Heart right ventricle (tissue), 16 donors: ENCODE measurements at regions of chr9 and their contacts with region 1.

Region 1: DNA sequence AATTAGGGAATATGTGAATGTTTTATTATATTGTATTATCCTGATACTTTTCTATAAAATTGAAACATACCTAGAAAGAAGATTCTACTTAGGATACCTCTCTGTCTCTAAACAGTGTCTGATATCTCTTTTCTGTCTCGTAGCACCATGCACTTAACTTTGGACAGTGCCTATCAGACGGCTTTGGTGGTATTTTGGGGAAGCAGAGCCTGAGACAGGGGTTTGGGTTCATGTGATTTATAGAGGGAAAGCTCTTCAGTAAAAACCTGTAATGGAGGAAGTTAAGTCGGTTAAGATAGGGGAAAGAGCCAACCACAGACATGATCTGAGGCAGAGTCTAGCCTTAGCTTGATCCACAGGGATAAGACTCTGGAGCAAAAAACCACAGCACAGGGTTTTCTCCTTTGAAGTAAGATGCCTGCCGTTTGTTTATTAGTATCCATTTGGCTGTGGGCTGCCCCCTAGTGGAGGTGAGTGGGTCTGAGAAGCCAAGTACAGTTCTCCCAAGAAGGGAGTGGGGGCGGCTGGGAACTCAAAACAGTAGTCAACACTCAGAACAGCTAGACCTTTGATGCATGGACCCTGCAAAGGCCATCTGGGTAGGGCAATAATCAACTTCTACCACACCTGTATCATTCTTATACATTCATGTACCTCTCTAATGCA is 141.2 kb upstream of the ASTN2 start:
- DNase-seq: peak; percentile 17 to 28
- ATAC-seq: peak in 1 of 8 donors; percentile 62
- H3K4me3 ChIP-seq: no peak overlapping the region
- H3K27ac ChIP-seq: no peak overlapping the region
- H3K4me1 ChIP-seq: no peaks in the 10 kb centered on the region
- H3K27me3 ChIP-seq: peaks cover 0 to 2% (median 0%) of the 10 kb centered on the region in 7 donors
- CTCF ChIP-seq: peak in 7 of 9 donors; percentile 32 to 57 (median 55)

Region 2: GRCh38 chr9:116432051-116432450 is 1124.0 kb before region 1 on chr9:
- intact Hi-C with region 1: loop called in 1 of 10 experiments (anchors 5 kb)
- DNase-seq: no peak
- ATAC-seq: no peak
- H3K4me3 ChIP-seq: no peak overlapping the region
- H3K27ac ChIP-seq: no peak overlapping the region
- H3K4me1 ChIP-seq: peaks cover 0 to 5% (median 0%) of the 10 kb centered on the region in 9 donors
- H3K27me3 ChIP-seq: no peaks in the 10 kb centered on the region
- CTCF ChIP-seq: no peak

Region 3: DNA sequence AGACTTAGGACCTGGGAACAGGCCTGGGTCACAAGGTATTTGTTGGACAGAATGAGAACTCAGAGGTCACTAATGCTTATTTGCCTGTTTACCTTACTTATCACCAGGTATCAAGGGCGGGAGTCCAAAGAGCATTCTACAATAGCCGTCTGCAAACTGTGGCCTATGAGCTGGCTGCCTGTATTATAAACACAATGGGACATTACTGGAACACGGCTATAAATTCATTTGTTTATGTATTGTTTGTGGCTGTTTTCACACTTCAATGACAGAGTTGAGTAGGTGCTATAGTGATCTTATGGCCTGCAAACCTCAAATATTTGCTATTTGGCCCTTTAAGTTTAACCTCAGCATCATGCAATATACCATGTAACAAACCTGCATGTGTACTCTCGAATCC is 64.6 kb before region 1 on chr9:
- intact Hi-C with region 1: loop called in 1 of 10 experiments (anchors 2 kb)
- DNase-seq: no peak
- ATAC-seq: no peak
- H3K4me3 ChIP-seq: no peak overlapping the region
- H3K27ac ChIP-seq: no peak overlapping the region
- H3K4me1 ChIP-seq: peaks cover 0 to 9% (median 0%) of the 10 kb centered on the region in 9 donors
- H3K27me3 ChIP-seq: no peaks in the 10 kb centered on the region
- CTCF ChIP-seq: no peak